AG04450 (cell line): ENCODE measurements at regions of chr10 and their contacts with region 1.

Region 1: DNA sequence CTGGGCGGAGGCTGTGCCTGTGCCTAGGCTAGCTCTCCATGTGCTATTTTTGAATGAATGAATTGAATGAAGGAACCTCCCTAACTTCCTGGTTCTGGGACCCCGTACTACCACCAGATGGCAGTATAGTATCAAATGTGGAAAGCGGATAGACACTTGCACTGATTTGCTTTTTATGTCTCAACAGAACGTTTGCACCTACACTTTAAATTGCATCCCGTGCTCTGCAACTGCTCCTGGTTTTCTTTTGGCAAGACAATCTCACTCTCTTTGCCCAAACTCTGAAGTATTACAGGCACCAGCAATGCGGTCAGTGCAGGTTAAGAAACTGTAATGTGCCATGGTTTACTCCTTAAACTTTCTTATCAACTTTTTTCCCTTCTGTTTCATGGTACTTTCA is 6.5 kb downstream of the FZD8 start:
- DNase-seq: peak; percentile 32
- H3K4me3 ChIP-seq: no peak overlapping the region
- H3K27ac ChIP-seq: no peak overlapping the region
- H3K27me3 ChIP-seq: no peaks in the 10 kb centered on the region
- CTCF ChIP-seq: peak; percentile 94

Region 2: GRCh38 chr10:35650894-35651293 is 15.3 kb after region 1 on chr10:
- CTCF ChIA-PET with region 1: no interaction called
- POLR2A ChIA-PET with region 1: no interaction called
- DNase-seq: no peak
- H3K4me3 ChIP-seq: no peak overlapping the region
- H3K27ac ChIP-seq: no peak overlapping the region
- H3K27me3 ChIP-seq: peaks cover 2% of the 10 kb centered on the region
- CTCF ChIP-seq: no peak

Region 3: DNA sequence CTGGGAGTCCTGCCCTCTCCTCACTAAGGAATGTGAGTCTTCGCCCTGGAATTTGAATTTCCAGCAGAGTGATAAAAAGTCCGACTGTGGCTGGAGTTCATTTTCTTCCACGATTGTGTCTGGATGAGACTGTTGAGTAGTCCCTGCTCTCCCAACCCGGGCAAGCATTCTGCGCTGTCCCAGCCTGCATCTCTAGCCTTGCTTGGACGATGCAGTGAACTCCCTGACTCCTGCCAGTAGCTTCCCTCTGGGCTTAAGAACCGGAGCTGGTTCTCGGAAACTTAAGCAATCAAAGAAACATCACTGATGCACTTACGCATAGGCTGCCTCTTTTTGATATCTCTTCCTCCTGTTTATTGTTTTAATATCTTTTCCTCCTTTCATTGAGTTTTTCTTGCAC is 122.5 kb after region 1 on chr10:
- CTCF ChIA-PET with region 1: no interaction called
- POLR2A ChIA-PET with region 1: no interaction called
- DNase-seq: no peak
- H3K4me3 ChIP-seq: no peak overlapping the region
- H3K27ac ChIP-seq: no peak overlapping the region
- H3K27me3 ChIP-seq: no peaks in the 10 kb centered on the region
- CTCF ChIP-seq: no peak

Region 4: DNA sequence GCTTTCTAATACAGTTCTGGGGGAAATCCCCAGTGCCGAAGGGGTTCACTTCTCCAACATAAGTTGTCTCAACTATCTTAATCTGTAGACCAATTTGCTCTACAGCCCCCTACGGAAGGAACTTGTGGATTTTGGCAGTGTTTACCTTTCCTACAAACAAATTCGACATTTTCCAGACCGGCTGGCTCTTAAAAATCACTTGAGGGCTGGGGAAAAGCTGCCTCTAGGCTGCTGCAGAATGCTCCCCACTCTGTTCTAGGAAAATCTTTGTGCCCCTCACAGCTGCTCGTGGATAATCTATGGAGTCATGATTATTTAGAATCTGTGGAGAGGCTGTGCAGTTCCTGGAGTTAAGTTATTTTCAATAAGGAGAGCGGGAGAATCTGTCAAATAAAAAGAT is 481.2 kb after region 1 on chr10:
- CTCF ChIA-PET with region 1: interaction called, 11 read pairs
- POLR2A ChIA-PET with region 1: no interaction called
- DNase-seq: no peak
- H3K4me3 ChIP-seq: no peak overlapping the region
- H3K27ac ChIP-seq: no peak overlapping the region
- H3K27me3 ChIP-seq: no peaks in the 10 kb centered on the region
- CTCF ChIP-seq: no peak

Region 5: GRCh38 chr10:36771725-36772124 is 1136.1 kb after region 1 on chr10:
- CTCF ChIA-PET with region 1: interaction called, 24 read pairs
- POLR2A ChIA-PET with region 1: no interaction called
- DNase-seq: no peak
- H3K4me3 ChIP-seq: no peak overlapping the region
- H3K27ac ChIP-seq: no peak overlapping the region
- H3K27me3 ChIP-seq: no peaks in the 10 kb centered on the region
- CTCF ChIP-seq: no peak

Region 6: GRCh38 chr10:36779234-36779846 is 1143.8 kb after region 1 on chr10:
- CTCF ChIA-PET with region 1: interaction called, 215 read pairs
- POLR2A ChIA-PET with region 1: no interaction called
- DNase-seq: peak; percentile 64
- H3K4me3 ChIP-seq: no peak overlapping the region
- H3K27ac ChIP-seq: no peak overlapping the region
- H3K27me3 ChIP-seq: no peaks in the 10 kb centered on the region
- CTCF ChIP-seq: peak; percentile 86

Region 7: GRCh38 chr10:36880898-36881297 is 1245.3 kb after region 1 on chr10:
- CTCF ChIA-PET with region 1: interaction called, 111 read pairs
- POLR2A ChIA-PET with region 1: no interaction called
- DNase-seq: peak; percentile 8
- H3K4me3 ChIP-seq: no peak overlapping the region
- H3K27ac ChIP-seq: no peak overlapping the region
- H3K27me3 ChIP-seq: peaks cover 2% of the 10 kb centered on the region
- CTCF ChIP-seq: peak; percentile 78